HEK293 (cell line): ENCODE measurements at regions of chr11 and their contacts with region 1.

Region 1: DNA sequence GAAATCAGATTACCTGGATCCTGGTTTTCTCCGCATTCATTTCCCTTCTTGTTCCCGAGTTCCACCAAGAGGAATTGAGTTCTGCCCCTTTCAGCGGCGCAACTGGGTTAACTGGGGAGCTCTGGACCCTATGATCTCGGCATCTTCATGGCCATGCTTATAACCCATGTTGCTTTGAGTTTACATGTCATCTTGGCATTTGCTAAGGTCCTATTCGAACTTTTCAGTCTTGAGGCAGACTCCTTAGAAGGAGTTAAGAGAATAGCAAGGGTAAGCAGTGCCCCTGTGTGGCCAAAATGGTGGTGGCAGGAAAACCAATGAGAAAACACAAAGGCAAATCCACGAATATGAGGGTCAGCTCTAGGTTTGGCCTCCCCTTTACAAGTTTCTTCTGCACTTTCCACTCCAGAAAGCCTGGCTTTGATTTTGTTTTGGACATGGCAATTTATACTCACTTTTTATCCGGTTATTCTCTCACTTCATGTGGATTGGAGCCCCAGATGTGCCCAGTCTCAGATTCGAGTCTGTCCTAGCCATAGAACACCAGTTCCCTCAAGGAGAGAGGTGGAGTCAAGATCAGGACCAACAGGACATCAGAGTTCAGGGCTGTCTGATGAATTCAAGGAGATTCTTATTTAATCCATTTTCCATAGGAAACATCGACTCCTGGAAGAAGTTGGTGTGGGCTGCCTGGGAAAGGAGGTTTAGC is 55.3 kb upstream of the FBXO3 start:
- H3K4me3 ChIP-seq: peak overlapping the region; percentile 31
- H3K27ac ChIP-seq: no peak overlapping the region
- H3K4me1 ChIP-seq: no peaks in the 10 kb centered on the region
- CTCF ChIP-seq: peak; percentile 64; the same call in 1 of the 2 replicates

Region 2: DNA sequence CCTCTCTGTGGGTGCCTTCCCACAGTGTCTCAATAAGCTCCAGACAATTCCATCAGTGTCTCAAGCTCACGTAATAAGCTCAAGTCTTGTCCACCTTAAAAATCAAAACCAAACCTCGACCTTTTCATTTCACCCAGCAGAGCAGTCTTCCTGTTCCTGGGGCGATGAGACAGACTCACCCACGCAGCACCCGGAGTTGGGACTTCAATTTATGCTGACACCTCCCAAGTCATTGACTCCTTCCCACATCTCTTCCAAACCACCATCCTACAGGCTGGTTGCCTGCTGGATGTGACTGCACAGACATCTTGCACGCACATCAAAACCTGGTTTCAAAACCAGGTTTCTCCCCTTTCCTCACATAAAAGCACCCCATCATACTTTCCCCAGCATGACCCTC is 10.3 kb before region 1 on chr11:
- CTCF ChIA-PET with region 1: interaction called, 13 read pairs
- POLR2A ChIA-PET with region 1: no interaction called
- H3K4me3 ChIP-seq: no peak overlapping the region
- H3K27ac ChIP-seq: no peak overlapping the region
- H3K4me1 ChIP-seq: no peaks in the 10 kb centered on the region
- CTCF ChIP-seq: no peak